ENCODE measurements at regions of chr18 and their contacts with region 1.

Region 1: GRCh38 chr18:49858309-49859020 is 45.1 kb upstream of the ACAA2 start:
- DNase-seq: peak; percentile 74 to 82
- H3K4me3 ChIP-seq: no peak overlapping the region
- H3K27ac ChIP-seq: peak overlapping the region in 1 of 3 donors; percentile 27
- H3K4me1 ChIP-seq: peaks cover 0 to 5% of the 10 kb centered on the region in 2 donors
- H3K27me3 ChIP-seq: no peaks in the 10 kb centered on the region
- CTCF ChIP-seq: peak; percentile 79 to 92 (median 88)
- POLR2A ChIP-seq: no peak

Region 2: DNA sequence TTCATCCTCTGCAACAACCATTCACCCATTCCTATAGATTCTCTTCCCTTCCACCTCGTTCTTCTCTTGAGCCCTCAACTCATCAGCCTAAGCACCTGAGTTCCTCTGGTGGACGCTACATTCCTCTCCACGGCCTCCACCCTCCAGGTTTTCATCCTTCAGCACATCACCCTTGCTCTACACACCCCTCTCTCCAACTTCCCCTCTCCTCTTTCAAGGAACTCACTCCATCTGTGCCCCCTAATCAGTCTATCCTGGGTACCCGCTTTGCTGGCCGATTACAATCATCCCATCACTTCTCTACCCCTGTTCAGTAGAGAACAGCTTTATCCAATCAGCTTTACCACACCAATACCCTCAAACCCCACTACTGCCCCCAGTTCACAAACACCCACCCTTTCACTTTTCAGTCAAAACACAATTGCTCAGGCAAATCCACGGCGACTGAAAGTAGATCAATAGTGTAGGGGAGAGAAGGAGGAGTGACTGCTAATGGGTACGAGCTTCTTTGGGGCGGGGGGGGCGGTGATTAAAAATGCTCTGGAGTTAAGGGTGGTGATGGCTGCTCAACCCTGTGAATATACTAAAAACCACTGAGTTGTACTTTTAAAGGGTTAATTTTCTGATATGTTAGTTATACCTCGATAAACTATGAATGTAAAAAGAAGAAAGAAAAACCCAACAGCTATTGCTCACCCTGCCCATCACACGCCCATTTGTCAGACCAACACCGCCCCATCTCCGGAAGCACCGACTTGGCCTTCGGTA is 398.9 kb before region 1 on chr18:
- intact Hi-C with region 1: no loop called
- DNase-seq: peak in 1 of 2 donors; percentile 26
- H3K4me3 ChIP-seq: peak overlapping the region; percentile 87 to 96 (median 91)
- H3K27ac ChIP-seq: peak overlapping the region; percentile 90 to 92 (median 90)
- H3K4me1 ChIP-seq: peaks cover 6 to 12% of the 10 kb centered on the region in 2 donors
- H3K27me3 ChIP-seq: no peaks in the 10 kb centered on the region
- CTCF ChIP-seq: no peak
- POLR2A ChIP-seq: no peak

Region 3: GRCh38 chr18:49510393-49511115 is 347.9 kb before region 1 on chr18:
- intact Hi-C with region 1: loop called (anchors 5 kb)
- DNase-seq: peak; percentile 43 to 62
- H3K4me3 ChIP-seq: no peak overlapping the region
- H3K27ac ChIP-seq: no peak overlapping the region
- H3K4me1 ChIP-seq: no peaks in the 10 kb centered on the region
- H3K27me3 ChIP-seq: no peaks in the 10 kb centered on the region
- CTCF ChIP-seq: peak; percentile 56 to 87 (median 76)
- POLR2A ChIP-seq: no peak

Region 4: DNA sequence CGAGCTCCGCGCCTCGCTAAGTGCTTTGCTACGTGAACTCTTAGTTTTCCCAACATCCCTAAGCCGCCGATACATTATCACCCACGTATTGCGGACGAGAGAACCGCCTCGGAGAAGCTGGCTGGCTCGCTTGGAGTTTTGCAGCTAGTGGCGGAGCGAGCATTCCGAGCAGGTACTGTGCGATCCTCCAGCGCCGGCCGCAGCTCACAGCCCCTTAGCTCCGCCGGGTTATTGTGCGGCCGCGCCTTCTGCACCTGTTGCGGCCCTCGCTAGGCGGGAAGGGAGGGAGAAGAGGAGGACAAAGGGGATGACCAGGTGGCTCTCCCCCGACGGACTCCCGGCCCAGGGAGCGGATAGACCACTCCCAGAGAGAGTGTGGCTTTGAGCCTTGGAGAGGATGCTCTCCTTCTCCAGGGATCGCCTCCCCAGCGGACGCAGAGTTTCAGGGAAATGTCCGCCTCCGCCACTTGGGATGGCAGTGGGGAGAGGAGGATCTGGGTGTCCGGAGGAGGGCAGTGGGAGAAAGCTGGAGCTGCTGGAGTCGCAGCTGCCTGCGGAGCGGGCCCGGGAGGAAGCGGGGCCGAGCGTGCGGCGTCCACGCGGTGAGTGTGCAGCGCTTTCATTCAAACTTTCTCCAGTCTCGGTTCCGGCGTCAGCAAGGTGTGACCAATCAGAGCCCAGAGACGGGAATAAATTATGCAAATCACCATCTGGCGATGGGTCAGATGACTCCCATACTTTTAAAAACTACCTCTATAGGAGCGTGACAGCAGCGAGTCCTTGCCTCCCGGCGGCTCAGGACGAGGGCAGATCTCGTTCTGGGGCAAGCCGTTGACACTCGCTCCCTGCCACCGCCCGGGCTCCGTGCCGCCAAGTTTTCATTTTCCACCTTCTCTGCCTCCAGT is 296.9 kb before region 1 on chr18 and contains the start of gene LIPG:
- intact Hi-C with region 1: loop called (anchors 5 kb)
- DNase-seq: peak; percentile 83 to 88
- H3K4me3 ChIP-seq: peak within 1 kb of the TSS; percentile 54 to 91 (median 77)
- H3K27ac ChIP-seq: peak within 1 kb of the TSS; percentile 34 to 63 (median 54)
- H3K4me1 ChIP-seq: peaks cover 14 to 28% of the 10 kb centered on the region in 2 donors
- H3K27me3 ChIP-seq: no peaks in the 10 kb centered on the region
- CTCF ChIP-seq: no peak
- POLR2A ChIP-seq: peak; percentile 65 to 97
- total RNA-seq, gene LIPG: 230 to 981 (median 515) TPM

Region 5: GRCh38 chr18:49784427-49785185 is 73.9 kb before region 1 on chr18:
- intact Hi-C with region 1: loop called (anchors 10 kb)
- DNase-seq: no peak
- H3K4me3 ChIP-seq: no peak overlapping the region
- H3K27ac ChIP-seq: peak overlapping the region in 2 of 3 donors; percentile 27 to 67
- H3K4me1 ChIP-seq: peaks cover 5 to 10% of the 10 kb centered on the region in 2 donors
- H3K27me3 ChIP-seq: no peaks in the 10 kb centered on the region
- CTCF ChIP-seq: peak in 3 of 6 experiments; percentile 37 to 46 (median 43)
- POLR2A ChIP-seq: no peak

Region 6: DNA sequence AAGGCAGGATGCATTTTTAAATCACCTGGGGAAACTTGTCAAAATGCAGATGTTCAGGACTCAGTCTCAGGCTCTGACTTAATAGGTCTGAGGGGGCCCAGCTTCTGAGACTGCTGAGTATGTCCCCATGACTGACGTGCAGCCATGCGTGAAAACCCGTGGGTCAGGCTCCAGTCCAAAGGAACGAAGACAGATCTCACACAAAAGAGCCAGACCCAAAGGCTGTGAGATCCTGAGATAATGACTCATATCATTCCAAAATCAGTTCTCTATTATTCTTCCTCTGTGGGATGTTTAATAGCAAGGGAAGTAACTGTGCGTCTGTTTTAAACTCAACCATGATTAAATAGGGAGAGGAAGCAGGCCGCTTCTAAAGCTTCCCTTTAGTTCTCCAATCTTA is 62.3 kb after region 1 on chr18:
- intact Hi-C with region 1: no loop called
- DNase-seq: peak; percentile 36 to 51
- H3K4me3 ChIP-seq: no peak overlapping the region
- H3K27ac ChIP-seq: no peak overlapping the region
- H3K4me1 ChIP-seq: peaks cover 11% of the 10 kb centered on the region in 2 donors
- H3K27me3 ChIP-seq: no peaks in the 10 kb centered on the region
- CTCF ChIP-seq: no peak
- POLR2A ChIP-seq: no peak

Region 7: GRCh38 chr18:50143295-50143694 is 284.8 kb after region 1 on chr18:
- intact Hi-C with region 1: no loop called
- DNase-seq: no peak
- H3K4me3 ChIP-seq: no peak overlapping the region
- H3K27ac ChIP-seq: no peak overlapping the region
- H3K4me1 ChIP-seq: peaks cover 0 to 13% of the 10 kb centered on the region in 2 donors
- H3K27me3 ChIP-seq: no peaks in the 10 kb centered on the region
- CTCF ChIP-seq: no peak
- POLR2A ChIP-seq: no peak

Measured in thyroid gland (tissue), 4 donors.